GM12878 (cell line): ENCODE measurements at regions of chrX and their contacts with region 1.

Region 1: GRCh38 chrX:48451708-48452107 is 18.4 kb downstream of the SLC38A5 start:
- DNase-seq: no peak
- ATAC-seq: no peak
- H3K4me3 ChIP-seq: no peak overlapping the region
- H3K27ac ChIP-seq: no peak overlapping the region
- H3K4me1 ChIP-seq: no peaks in the 10 kb centered on the region
- H3K27me3 ChIP-seq: no peaks in the 10 kb centered on the region
- CTCF ChIP-seq: no peak
- EP300 ChIP-seq: no peak
- POLR2A ChIP-seq: no peak
- RAD21 ChIP-seq: no peak

Region 2: GRCh38 chrX:48306175-48306574 is 145.5 kb before region 1 on chrX:
- CTCF ChIA-PET with region 1: no interaction called
- POLR2A ChIA-PET with region 1: no interaction called
- RAD21 ChIA-PET with region 1: no interaction called
- SMC1A ChIA-PET with region 1: no interaction called
- in situ Hi-C with region 1: loop called (anchors 25 kb)
- intact Hi-C with region 1: no loop called
- DNase-seq: no peak
- ATAC-seq: no peak
- H3K4me3 ChIP-seq: no peak overlapping the region
- H3K27ac ChIP-seq: no peak overlapping the region
- H3K4me1 ChIP-seq: no peaks in the 10 kb centered on the region
- H3K27me3 ChIP-seq: no peaks in the 10 kb centered on the region
- CTCF ChIP-seq: no peak
- EP300 ChIP-seq: no peak
- POLR2A ChIP-seq: no peak
- RAD21 ChIP-seq: no peak